ENCODE measurements at regions of chr22 and their contacts with region 1.

Region 1: GRCh38 chr22:32796865-32797573 is 4.5 kb upstream of the TIMP3 start:
- DNase-seq: peak; percentile 70 to 78
- ATAC-seq: peak; percentile 40 to 63 (median 60)
- H3K4me3 ChIP-seq: no peak overlapping the region
- H3K27ac ChIP-seq: no peak overlapping the region
- H3K4me1 ChIP-seq: no peaks in the 10 kb centered on the region
- H3K27me3 ChIP-seq: peaks cover 0 to 30% (median 1%) of the 10 kb centered on the region in 3 donors
- CTCF ChIP-seq: peak; percentile 53

Region 2: GRCh38 chr22:32649515-32650200 is 147.4 kb before region 1 on chr22:
- intact Hi-C with region 1: loop called in 1 of 2 experiments (anchors 10 kb)
- DNase-seq: peak; percentile 35 to 80
- ATAC-seq: peak in 3 of 4 donors; percentile 50 to 74 (median 71)
- H3K4me3 ChIP-seq: no peak overlapping the region
- H3K27ac ChIP-seq: no peak overlapping the region
- H3K4me1 ChIP-seq: no peaks in the 10 kb centered on the region
- H3K27me3 ChIP-seq: no peaks in the 10 kb centered on the region
- CTCF ChIP-seq: no peak

Region 3: DNA sequence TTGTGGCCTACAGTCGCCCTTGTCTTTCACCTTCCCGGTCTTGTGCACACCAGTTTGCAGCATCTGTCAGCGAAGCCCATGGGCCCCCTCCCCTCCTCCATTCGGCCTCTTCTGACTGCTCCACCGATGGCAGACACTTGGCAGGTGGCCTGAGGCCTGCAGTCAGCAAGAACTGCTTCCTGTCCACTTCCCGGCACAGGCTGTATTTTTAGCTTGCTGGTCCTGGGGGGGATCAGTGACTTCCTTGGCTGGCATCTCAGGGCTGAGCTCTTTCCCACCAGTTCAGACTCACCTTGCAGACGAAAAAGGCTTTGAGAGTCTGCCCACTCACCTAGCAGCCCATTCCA is 154.8 kb after region 1 on chr22:
- intact Hi-C with region 1: no loop called
- DNase-seq: peak; percentile 21 to 61
- ATAC-seq: peak in 2 of 4 donors; percentile 32 to 50
- H3K4me3 ChIP-seq: no peak overlapping the region
- H3K27ac ChIP-seq: no peak overlapping the region
- H3K4me1 ChIP-seq: peaks cover 2% of the 10 kb centered on the region
- H3K27me3 ChIP-seq: no peaks in the 10 kb centered on the region
- CTCF ChIP-seq: no peak

Region 4: GRCh38 chr22:32991353-32992121 is 194.5 kb after region 1 on chr22:
- intact Hi-C with region 1: loop called in 1 of 2 experiments (anchors 10 kb)
- DNase-seq: peak; percentile 79 to 89
- ATAC-seq: peak in 2 of 4 donors; percentile 46 to 67
- H3K4me3 ChIP-seq: no peak overlapping the region
- H3K27ac ChIP-seq: no peak overlapping the region
- H3K4me1 ChIP-seq: no peaks in the 10 kb centered on the region
- H3K27me3 ChIP-seq: peaks cover 0 to 18% (median 5%) of the 10 kb centered on the region in 3 donors
- CTCF ChIP-seq: no peak

Measured in psoas muscle (tissue), 8 donors.